MCF 10A (cell line): ENCODE measurements at regions of chr7 and their contacts with region 1.

Region 1: DNA sequence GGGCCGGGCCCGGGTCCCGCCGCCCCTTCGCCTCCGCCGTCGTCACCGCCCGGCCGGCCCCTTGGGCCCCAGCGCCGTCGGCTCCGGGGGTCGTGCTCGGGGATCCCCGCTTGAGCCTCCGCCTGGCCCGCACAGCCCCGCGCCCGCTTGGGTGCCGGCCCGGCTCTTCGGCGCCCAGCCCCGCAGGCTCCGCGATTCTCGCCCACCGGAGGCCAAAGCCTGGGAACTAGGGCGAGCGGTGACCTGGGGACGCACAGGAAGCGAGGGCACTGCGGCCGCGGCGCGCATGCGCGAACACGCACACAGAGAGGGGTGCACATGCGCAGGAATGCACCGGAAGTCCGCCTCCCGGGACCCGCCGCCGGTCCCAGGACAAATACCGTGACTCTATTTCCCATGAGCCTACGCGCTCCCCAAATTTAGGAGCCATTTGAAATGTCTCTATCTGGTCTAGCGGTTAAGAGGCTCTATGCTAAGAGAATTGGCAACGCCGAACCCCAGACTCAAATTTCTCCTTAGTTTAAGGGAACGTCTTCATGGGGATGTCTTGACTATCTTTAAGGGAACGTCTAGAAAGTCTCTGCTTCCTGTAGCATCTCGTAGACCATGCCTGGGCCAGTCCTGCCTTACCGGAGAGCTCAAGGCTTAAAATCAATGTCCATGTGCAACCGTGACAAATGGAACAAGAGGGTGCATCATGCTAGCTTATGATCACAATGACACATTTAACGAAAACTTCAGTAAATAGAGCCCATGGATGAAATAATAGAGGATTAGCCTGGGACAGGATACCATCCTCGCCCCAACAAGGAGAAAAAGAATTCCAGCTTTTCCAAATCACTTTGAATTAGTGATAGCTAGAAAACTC is at the start of gene ZNF12:
- DNase-seq: peak; percentile 92
- H3K4me3 Mint-ChIP-seq: peak within 1 kb of the TSS; percentile 96
- H3K27ac Mint-ChIP-seq: peak within 1 kb of the TSS; percentile 94
- H3K4me1 Mint-ChIP-seq: peaks cover 17% of the 10 kb centered on the region
- H3K27me3 Mint-ChIP-seq: no peaks in the 10 kb centered on the region
- CTCF ChIP-seq: no peak
- total RNA-seq, gene ZNF12: 22.1 and 22.4 TPM in 2 replicates

Region 2: DNA sequence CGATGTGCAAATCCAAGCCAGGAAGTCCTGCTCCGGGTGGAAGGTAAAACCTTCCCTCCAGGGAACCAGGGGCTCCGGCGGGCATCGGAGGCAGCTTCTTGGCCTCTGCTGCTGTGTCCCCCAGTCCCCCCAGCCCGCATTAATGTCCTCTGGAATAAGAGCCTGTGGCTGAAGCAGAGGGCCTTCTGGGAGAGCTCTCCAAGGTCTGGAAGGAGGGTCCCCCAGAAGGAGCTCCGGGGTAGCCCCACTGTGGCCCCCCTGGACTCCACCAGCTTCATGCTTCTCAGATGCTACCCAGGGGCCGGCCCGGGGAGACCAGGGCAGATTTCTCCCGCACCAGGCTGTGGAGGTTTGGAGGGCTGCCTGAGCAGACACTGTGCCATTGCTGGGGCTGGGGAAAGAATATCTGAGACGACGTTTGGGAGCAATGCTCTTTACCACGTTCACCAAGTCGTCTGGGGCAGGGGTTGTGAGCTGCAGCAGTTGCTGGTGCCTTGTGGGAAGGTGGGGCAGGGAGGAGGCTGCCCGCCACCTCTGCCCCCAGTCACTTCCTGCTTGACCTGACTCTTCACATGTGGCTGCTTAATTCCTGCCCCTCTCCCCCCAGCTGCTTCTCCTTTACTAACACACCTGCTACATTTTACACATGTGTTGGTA is 83.2 kb before region 1 on chr7:
- CTCF ChIA-PET with region 1: no interaction called
- POLR2A ChIA-PET with region 1: no interaction called
- intact Hi-C with region 1: no loop called
- DNase-seq: no peak
- H3K4me3 Mint-ChIP-seq: no peak overlapping the region
- H3K27ac Mint-ChIP-seq: no peak overlapping the region
- H3K4me1 Mint-ChIP-seq: no peaks in the 10 kb centered on the region
- H3K27me3 Mint-ChIP-seq: peaks cover 15% of the 10 kb centered on the region
- CTCF ChIP-seq: no peak

Region 3: GRCh38 chr7:6729492-6730342 is 22.8 kb after region 1 on chr7:
- CTCF ChIA-PET with region 1: no interaction called
- POLR2A ChIA-PET with region 1: interaction called, 9 read pairs
- intact Hi-C with region 1: loop called (anchors 2 kb)
- DNase-seq: peak; percentile 83
- H3K4me3 Mint-ChIP-seq: peak overlapping the region; percentile 85
- H3K27ac Mint-ChIP-seq: peak overlapping the region; percentile 95
- H3K4me1 Mint-ChIP-seq: peaks cover 10% of the 10 kb centered on the region
- H3K27me3 Mint-ChIP-seq: no peaks in the 10 kb centered on the region
- CTCF ChIP-seq: no peak